MCF 10A (cell line): ENCODE measurements at regions of chr7 and their contacts with region 1.

Region 1: GRCh38 chr7:71338866-71339265 is 206.9 kb downstream of the GALNT17 start:
- DNase-seq: no peak
- H3K4me3 Mint-ChIP-seq: no peak overlapping the region
- H3K27ac Mint-ChIP-seq: no peak overlapping the region
- H3K4me1 Mint-ChIP-seq: no peaks in the 10 kb centered on the region
- H3K27me3 Mint-ChIP-seq: no peaks in the 10 kb centered on the region
- CTCF ChIP-seq: no peak

Region 2: GRCh38 chr7:70764701-70765208 is 574.1 kb before region 1 on chr7:
- CTCF ChIA-PET with region 1: no interaction called
- POLR2A ChIA-PET with region 1: no interaction called
- intact Hi-C with region 1: loop called (anchors 5 kb)
- DNase-seq: no peak
- H3K4me3 Mint-ChIP-seq: no peak overlapping the region
- H3K27ac Mint-ChIP-seq: no peak overlapping the region
- H3K4me1 Mint-ChIP-seq: no peaks in the 10 kb centered on the region
- H3K27me3 Mint-ChIP-seq: no peaks in the 10 kb centered on the region
- CTCF ChIP-seq: no peak